Activated CD8-positive, alpha-beta T cell treated with anti-CD3 and anti-CD28 coated beads for 36 hours (primary cell): ENCODE measurements at regions of chr14 and their contacts with region 1.

Region 1: DNA sequence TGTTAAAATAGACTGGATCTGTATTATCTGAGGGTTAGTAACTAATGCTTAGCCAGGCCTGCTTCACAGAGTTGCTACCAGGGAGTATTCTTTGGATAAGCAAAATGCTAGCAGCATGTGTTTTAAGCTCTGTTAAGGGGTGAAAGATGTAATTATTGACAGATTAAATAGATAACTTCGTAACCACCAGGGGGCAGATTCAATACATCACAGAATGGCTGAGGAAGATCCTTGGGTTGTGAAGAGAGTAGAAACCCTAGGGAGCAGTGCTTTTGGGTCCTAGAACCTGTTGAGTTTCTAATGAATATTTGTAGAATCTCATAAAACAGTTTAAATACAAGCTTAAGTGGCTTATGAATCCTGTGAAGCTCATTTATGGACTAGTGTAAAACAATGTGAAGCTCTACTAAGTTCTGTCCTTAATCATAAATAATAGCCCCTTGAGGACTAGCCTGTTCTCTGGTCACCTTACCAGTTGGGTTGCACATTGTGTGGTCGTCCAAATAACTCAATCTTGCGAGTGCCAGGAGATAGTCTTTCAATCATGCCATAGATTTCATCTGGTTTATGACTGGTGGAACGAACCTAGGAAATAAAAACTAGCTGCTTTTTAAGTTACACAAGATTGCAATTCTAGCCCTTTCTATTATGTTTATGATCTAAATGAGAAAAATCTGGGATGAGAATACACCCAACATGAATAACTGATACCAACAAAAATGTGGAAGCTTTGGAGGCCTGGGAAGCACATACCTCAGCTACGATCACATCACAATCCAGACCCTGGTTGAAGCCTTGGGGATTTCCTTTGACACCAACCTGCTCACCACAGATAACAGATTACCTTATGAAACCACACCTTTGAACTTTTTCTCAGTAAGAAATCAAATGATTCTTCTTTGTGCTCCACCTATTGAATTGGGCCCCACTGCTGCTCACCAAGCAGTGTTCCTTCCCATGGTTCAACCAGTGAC is 12.3 kb downstream of the METTL3 start:
- DNase-seq: peak; percentile 35
- ATAC-seq: peak; percentile 72
- H3K4me3 Mint-ChIP-seq: no peak overlapping the region
- H3K27ac Mint-ChIP-seq: peak overlapping the region; percentile 72
- H3K4me1 Mint-ChIP-seq: peaks cover 19% of the 10 kb centered on the region
- H3K27me3 Mint-ChIP-seq: no peaks in the 10 kb centered on the region
- CTCF ChIP-seq: peak; percentile 77

Region 2: DNA sequence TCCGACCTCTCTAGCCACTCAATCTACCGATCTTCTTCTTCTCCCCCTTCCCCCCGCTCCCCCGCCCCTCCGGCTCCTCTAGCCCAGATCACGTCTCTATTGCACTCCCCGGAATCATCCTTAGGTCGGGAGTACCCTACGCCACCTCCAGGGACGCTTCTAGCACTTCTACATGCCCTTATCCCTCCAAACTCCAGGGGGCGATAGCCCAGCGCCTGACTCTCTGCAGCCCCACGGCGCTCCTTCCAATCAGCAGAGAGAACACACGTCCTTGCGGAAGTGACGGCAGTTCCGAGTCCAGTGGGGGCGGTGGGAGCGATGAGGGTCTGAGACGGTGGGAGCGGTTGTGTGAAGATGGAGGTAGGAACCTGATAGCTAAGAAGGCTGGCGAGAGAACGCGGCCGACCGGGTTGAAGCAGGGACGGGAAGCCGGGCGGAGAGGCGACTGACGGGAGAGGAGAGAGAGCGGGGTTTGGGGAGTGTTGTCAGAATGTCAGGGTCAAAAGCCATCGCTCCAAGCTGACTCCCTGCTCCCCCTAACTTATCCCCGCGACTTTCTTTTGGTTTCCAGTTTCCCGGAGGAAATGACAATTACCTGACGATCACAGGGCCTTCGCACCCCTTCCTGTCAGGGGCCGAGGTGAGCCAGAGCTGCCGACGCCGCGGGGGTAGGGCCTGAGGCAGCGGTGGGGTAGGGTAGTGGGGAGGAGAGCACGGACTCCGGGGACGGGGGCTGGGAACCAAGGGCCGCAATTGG is 21.7 kb before region 1 on chr14 and contains the starts of genes RAB2B and TOX4:
- CTCF ChIA-PET with region 1: interaction called, 28 read pairs
- POLR2A ChIA-PET with region 1: interaction called, 5 read pairs
- intact Hi-C with region 1: no loop called
- DNase-seq: peak; percentile 97
- ATAC-seq: peak; percentile 99
- H3K4me3 Mint-ChIP-seq: peak within 1 kb of the TSS; percentile 98
- H3K27ac Mint-ChIP-seq: peak within 1 kb of the TSS; percentile 99
- H3K4me1 Mint-ChIP-seq: peaks cover 21% of the 10 kb centered on the region
- H3K27me3 Mint-ChIP-seq: no peaks in the 10 kb centered on the region
- CTCF ChIP-seq: peak; percentile 96
- total RNA-seq, gene RAB2B: 18.2 to 19.8 TPM
- total RNA-seq, gene TOX4: 65.2 to 65.8 TPM

Region 3: GRCh38 chr14:21510735-21511657 is 12.2 kb after region 1 on chr14 and contains the start of gene METTL3:
- CTCF ChIA-PET with region 1: interaction called, 66 read pairs
- POLR2A ChIA-PET with region 1: interaction called, 14 read pairs
- intact Hi-C with region 1: no loop called
- DNase-seq: peak; percentile 96
- ATAC-seq: peak; percentile 99
- H3K4me3 Mint-ChIP-seq: peak within 1 kb of the TSS; percentile 100
- H3K27ac Mint-ChIP-seq: peak within 1 kb of the TSS; percentile 99
- H3K4me1 Mint-ChIP-seq: peaks cover 32% of the 10 kb centered on the region
- H3K27me3 Mint-ChIP-seq: no peaks in the 10 kb centered on the region
- CTCF ChIP-seq: no peak
- total RNA-seq, gene METTL3: 66.7 to 70.8 TPM

Region 4: GRCh38 chr14:21525962-21526671 is 27.3 kb after region 1 on chr14 and contains the start of gene SALL2:
- CTCF ChIA-PET with region 1: interaction called, 41 read pairs
- POLR2A ChIA-PET with region 1: interaction called, 7 read pairs
- intact Hi-C with region 1: no loop called
- DNase-seq: peak; percentile 83
- ATAC-seq: peak; percentile 90
- H3K4me3 Mint-ChIP-seq: peak within 1 kb of the TSS; percentile 70
- H3K27ac Mint-ChIP-seq: peak within 1 kb of the TSS; percentile 75
- H3K4me1 Mint-ChIP-seq: peaks cover 16% of the 10 kb centered on the region
- H3K27me3 Mint-ChIP-seq: no peaks in the 10 kb centered on the region
- CTCF ChIP-seq: no peak
- total RNA-seq, gene SALL2: 2.9 to 3.5 TPM